ENCODE measurements at regions of chr12 and their contacts with region 1.

Region 1: GRCh38 chr12:51341259-51342007 is 5.0 kb downstream of the CELA1 start:
- DNase-seq: peak; percentile 54 to 89
- ATAC-seq: peak; percentile 95 to 99 (median 97)
- H3K4me3 ChIP-seq: no peak overlapping the region
- H3K4me3 Mint-ChIP-seq: peak overlapping the region; percentile 77
- H3K27ac ChIP-seq: peak overlapping the region; percentile 8
- H3K27ac Mint-ChIP-seq: peak overlapping the region; percentile 79 to 88
- H3K4me1 ChIP-seq: peaks cover 9% of the 10 kb centered on the region
- H3K4me1 Mint-ChIP-seq: peaks cover 7 to 14% of the 10 kb centered on the region in 2 donors
- H3K27me3 ChIP-seq: no peaks in the 10 kb centered on the region
- H3K27me3 Mint-ChIP-seq: no peaks in the 10 kb centered on the region
- CTCF ChIP-seq: peak; percentile 96

Region 2: DNA sequence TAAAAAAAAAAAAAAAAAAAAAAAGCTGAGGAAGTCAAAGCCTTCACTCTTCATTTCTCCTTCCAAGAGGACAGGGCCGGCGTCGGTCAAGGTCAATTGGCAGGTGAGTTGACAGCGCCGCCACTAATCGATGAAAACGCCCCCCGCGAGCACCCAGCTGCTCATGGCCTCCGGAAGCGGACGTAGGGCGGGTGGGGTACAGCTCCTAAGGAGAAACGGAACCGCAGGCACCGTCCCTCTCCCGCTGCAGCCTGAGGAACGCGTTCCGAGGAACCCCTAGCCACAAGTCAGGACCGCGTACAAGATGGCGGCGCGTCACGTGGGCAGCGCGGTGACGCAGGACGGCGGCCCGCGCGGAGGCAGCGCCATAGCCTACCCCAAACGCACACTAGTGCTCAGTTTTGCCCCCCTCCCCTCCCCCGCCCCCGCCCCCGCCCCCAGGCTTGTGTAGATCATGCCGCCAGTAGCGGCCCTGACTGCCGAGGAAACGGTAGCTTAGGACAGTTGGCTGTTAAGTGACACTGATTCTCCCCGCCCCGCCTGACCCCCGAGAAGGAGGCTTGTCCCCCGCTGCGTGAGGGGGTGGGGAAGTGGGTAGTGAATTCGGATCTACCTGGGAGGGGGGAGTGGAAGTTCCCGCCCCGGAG is 577.7 kb before region 1 on chr12 and contains the start of gene ATF1:
- intact Hi-C with region 1: loop called (anchors 1 kb)
- DNase-seq: peak; percentile 91 to 95
- ATAC-seq: peak; percentile 75 to 91 (median 82)
- H3K4me3 ChIP-seq: peak within 1 kb of the TSS; percentile 92
- H3K4me3 Mint-ChIP-seq: peak within 1 kb of the TSS; percentile 97
- H3K27ac ChIP-seq: peak within 1 kb of the TSS; percentile 96
- H3K27ac Mint-ChIP-seq: peak within 1 kb of the TSS; percentile 91 to 93
- H3K4me1 ChIP-seq: peaks cover 17% of the 10 kb centered on the region
- H3K4me1 Mint-ChIP-seq: peaks cover 26 to 37% of the 10 kb centered on the region in 2 donors
- H3K27me3 ChIP-seq: no peaks in the 10 kb centered on the region
- H3K27me3 Mint-ChIP-seq: no peaks in the 10 kb centered on the region
- CTCF ChIP-seq: no peak
- total RNA-seq, gene ATF1: 20.1 to 36.8 (median 23.1) TPM

Region 3: DNA sequence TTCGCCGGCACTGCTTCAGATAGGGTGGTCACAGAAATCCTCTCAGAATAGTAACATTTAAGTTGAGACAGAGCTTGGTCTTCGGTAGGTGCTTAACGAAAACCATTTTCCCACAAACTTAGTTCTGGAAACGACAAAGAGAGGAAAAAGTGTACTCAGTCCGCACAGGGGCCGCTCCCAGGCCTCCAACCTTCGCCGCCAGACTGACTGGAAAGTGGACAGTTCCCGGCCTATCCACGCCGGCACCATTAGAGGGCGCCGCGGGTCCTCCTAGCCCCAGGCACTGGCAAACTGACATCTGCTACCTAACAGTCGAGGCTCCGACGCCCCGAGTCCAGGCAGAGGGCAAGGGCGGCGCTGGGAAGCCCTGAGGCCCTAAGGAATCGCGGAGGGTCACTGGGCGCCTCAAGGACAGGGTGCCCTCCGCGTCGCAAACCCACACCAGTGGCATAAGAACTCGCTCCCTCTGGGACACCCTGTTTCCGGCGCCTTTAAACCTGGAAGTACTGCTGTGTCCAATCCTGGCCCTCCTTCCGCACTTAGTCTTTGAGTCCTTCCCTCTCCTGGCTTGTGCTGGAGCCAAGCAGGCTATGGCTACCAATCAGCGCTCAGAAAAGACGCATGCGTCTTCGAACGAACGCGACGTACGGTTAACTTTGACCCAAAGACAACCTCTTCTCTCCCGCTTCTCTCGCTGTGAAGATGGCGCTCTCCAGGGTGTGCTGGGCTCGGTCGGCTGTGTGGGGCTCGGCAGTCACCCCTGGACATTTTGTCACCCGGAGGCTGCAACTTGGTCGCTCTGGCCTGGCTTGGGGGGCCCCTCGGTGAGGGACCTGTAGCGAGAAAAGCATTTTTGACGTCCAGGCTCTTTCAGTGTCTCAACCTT is 293.5 kb before region 1 on chr12 and contains the start of gene LETMD1:
- intact Hi-C with region 1: loop called (anchors 1 kb)
- DNase-seq: peak; percentile 84 to 98
- ATAC-seq: peak; percentile 93 to 98 (median 94)
- H3K4me3 ChIP-seq: peak within 1 kb of the TSS; percentile 63
- H3K4me3 Mint-ChIP-seq: peak within 1 kb of the TSS; percentile 91
- H3K27ac ChIP-seq: peak within 1 kb of the TSS; percentile 83
- H3K27ac Mint-ChIP-seq: peak within 1 kb of the TSS; percentile 90 to 96
- H3K4me1 ChIP-seq: peaks cover 19% of the 10 kb centered on the region
- H3K4me1 Mint-ChIP-seq: peaks cover 26 to 37% of the 10 kb centered on the region in 2 donors
- H3K27me3 ChIP-seq: no peaks in the 10 kb centered on the region
- H3K27me3 Mint-ChIP-seq: no peaks in the 10 kb centered on the region
- CTCF ChIP-seq: peak; percentile 95
- total RNA-seq, gene LETMD1: 57.1 to 71.8 (median 58.2) TPM

Region 4: GRCh38 chr12:51269174-51270066 is 72.0 kb before region 1 on chr12:
- intact Hi-C with region 1: loop called (anchors 5 kb)
- DNase-seq: peak in 1 of 2 donors; percentile 80
- ATAC-seq: peak; percentile 36 to 67 (median 37)
- H3K4me3 ChIP-seq: peak overlapping the region; percentile 17
- H3K4me3 Mint-ChIP-seq: peak overlapping the region; percentile 87
- H3K27ac ChIP-seq: peak overlapping the region; percentile 6
- H3K27ac Mint-ChIP-seq: peak overlapping the region; percentile 83 to 86
- H3K4me1 ChIP-seq: peaks cover 23% of the 10 kb centered on the region
- H3K4me1 Mint-ChIP-seq: peaks cover 39 to 40% of the 10 kb centered on the region in 2 donors
- H3K27me3 ChIP-seq: no peaks in the 10 kb centered on the region
- H3K27me3 Mint-ChIP-seq: no peaks in the 10 kb centered on the region
- CTCF ChIP-seq: no peak

Region 5: GRCh38 chr12:51318837-51319599 is 22.4 kb before region 1 on chr12:
- intact Hi-C with region 1: loop called (anchors 1 kb)
- DNase-seq: peak; percentile 35 to 84
- ATAC-seq: peak; percentile 75 to 90 (median 87)
- H3K4me3 ChIP-seq: peak overlapping the region; percentile 3
- H3K4me3 Mint-ChIP-seq: peak overlapping the region; percentile 80
- H3K27ac ChIP-seq: peak overlapping the region; percentile 97
- H3K27ac Mint-ChIP-seq: peak overlapping the region; percentile 87 to 90
- H3K4me1 ChIP-seq: peaks cover 80% of the 10 kb centered on the region
- H3K4me1 Mint-ChIP-seq: peaks cover 78 to 79% of the 10 kb centered on the region in 2 donors
- H3K27me3 ChIP-seq: no peaks in the 10 kb centered on the region
- H3K27me3 Mint-ChIP-seq: no peaks in the 10 kb centered on the region
- CTCF ChIP-seq: no peak

Measured in natural killer cell (primary cell).